HepG2 (cell line): ENCODE measurements at regions of chr11 and their contacts with region 1.

Region 1: DNA sequence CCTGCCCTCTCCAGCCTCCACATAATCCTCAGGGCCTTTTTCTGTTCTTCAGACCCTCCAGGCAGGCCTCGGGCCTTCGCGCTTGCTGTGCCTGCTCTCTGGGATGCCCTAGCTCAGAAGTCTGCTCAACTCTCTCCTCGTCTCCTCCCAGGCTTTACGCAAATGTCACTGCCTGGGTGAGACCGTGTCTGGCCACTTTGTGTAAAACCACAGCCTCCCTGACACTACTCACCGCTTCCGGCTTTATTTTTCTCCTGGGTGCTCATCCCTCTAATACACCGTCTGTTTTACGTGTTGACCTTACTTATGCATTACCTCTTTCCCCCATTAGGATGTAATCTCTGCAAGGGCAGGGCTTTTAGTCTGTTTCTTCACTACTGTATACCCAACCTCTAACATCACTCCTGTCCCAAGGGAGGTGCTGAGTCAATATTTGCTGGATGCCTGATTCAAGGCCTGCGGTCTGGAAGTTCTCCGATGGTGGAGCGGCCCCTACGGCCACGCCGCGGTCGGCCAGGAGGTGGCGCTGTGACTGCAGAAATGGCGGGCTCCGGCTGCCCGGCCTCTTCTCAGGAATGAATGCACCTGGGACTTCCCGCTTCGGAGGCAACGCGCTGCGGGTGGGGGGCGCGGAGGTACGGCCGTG is 58.2 kb upstream of the THY1 start:
- DNase-seq: peak; percentile 99
- ATAC-seq: peak; percentile 96
- H3K4me3 ChIP-seq: peak overlapping the region in 1 of 3 experiments; percentile 44; a peak in 1 of 6 replicates
- H3K27ac ChIP-seq: no peak overlapping the region
- H3K4me1 ChIP-seq: peaks cover 41% of the 10 kb centered on the region
- H3K27me3 ChIP-seq: peaks cover 9 to 18% of the 10 kb centered on the region in 2 experiments; a peak in 4 of 5 replicates
- CTCF ChIP-seq: peak; percentile 99
- EP300 ChIP-seq: peak; percentile 49 to 72; a peak in 2 of 4 replicates
- POLR2A ChIP-seq: no peak
- RAD21 ChIP-seq: peak; percentile 97

Region 2: DNA sequence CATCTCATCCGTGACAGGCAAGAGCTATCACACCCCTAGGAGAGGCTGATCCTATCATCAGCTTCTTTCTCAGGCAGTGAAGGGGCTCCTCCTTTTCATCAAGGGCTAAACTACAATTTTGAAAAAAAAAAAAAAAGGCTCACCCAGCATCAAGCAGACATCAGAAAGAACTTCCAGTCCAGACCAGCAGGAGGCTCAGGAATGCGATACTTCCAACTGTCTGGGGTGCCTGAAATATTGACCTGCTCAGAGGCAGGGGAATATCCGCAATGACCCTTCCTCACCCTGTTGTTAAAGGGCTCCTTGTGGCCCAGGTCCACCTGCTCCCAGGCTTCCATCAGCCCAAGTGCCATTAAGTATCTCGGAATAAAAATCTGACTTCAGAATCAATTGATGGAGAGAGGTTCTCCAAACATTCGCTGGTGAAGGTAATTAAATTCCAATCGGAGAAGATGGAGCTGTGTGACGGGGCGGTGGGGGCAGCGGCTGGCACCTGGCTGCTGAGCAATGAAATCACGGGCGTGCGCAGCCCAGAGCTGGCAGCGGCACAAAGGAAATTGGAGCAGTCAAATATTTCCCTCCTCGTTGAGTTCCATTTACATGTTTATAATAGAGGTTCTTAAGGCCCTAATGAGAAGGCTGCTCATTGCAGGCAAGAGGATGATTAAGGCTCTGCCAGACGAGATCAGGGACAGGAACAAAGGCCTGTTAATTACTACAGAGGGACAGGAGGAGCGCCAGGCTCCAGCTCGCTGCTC is 10.8 kb after region 1 on chr11:
- CTCF ChIA-PET with region 1: no interaction called
- POLR2A ChIA-PET with region 1: no interaction called
- in situ Hi-C with region 1: no loop called
- intact Hi-C with region 1: no loop called
- DNase-seq: no peak
- ATAC-seq: peak; percentile 35; the same call in 1 of the 3 replicates
- H3K4me3 ChIP-seq: no peak overlapping the region
- H3K27ac ChIP-seq: no peak overlapping the region
- H3K4me1 ChIP-seq: no peaks in the 10 kb centered on the region
- H3K27me3 ChIP-seq: peaks cover 1 to 15% of the 10 kb centered on the region in 2 experiments; a peak in 3 of 5 replicates
- CTCF ChIP-seq: no peak
- EP300 ChIP-seq: no peak
- POLR2A ChIP-seq: no peak
- RAD21 ChIP-seq: no peak

Region 3: DNA sequence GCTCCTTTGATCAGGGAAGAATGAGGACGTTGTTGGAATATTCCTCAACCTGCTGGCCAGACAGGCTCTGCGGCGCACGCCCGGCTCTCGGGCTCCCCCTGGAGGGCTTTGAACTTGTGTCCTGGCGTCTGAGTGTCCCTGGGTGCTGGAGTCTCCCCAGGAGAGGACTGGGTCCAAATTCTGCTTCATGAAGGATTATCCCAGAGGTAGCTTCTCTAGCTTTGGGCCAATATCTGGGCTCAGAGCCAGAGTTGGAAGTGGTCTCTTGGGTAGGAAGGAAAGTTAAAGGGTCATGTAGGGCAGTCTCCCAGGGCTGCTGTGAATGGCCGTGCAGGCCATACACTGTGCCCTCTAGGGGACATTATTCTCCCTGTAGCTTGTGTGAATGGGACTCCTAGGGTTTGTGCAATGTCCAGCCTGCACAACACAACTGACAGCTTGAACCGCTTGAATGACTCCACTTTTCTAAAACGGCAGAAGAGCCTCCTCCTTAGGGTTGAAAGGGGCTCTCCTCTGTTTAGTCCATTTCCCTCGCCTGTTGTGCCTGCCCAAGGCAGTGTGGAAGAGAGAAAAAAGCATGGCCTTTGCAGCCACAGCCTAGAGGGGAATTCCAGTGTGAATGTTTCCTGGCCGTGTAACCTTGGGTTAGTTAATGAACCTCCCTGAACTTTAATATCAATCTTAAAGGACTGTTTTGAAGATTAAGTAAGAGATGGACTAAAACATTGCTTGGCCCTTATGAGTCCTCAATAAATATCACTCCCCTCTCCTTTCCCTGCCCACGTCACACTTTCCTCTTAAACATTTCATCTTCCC is 53.0 kb after region 1 on chr11:
- CTCF ChIA-PET with region 1: interaction called, 48 read pairs
- POLR2A ChIA-PET with region 1: no interaction called
- in situ Hi-C with region 1: loop called (anchors 5 kb)
- intact Hi-C with region 1: loop called (anchors 1 kb)
- DNase-seq: peak; percentile 57
- ATAC-seq: peak; percentile 98
- H3K4me3 ChIP-seq: no peak overlapping the region
- H3K27ac ChIP-seq: no peak overlapping the region
- H3K4me1 ChIP-seq: peaks cover 6% of the 10 kb centered on the region; the same call in 1 of the 2 replicates
- H3K27me3 ChIP-seq: peaks cover 3 to 50% of the 10 kb centered on the region in 2 experiments; a peak in 3 of 5 replicates
- CTCF ChIP-seq: peak; percentile 78
- EP300 ChIP-seq: no peak
- POLR2A ChIP-seq: no peak
- RAD21 ChIP-seq: no peak; the same call in 1 of the 2 replicates

Region 4: GRCh38 chr11:119741369-119742262 is 260.5 kb after region 1 on chr11:
- CTCF ChIA-PET with region 1: no interaction called
- POLR2A ChIA-PET with region 1: no interaction called
- in situ Hi-C with region 1: loop called (anchors 5 kb)
- intact Hi-C with region 1: no loop called
- DNase-seq: peak; percentile 21
- ATAC-seq: peak; percentile 95
- H3K4me3 ChIP-seq: peak overlapping the region in 2 of 3 experiments; percentile 33 to 61; a peak in 4 of 6 replicates
- H3K27ac ChIP-seq: no peak overlapping the region
- H3K4me1 ChIP-seq: peaks cover 18% of the 10 kb centered on the region
- H3K27me3 ChIP-seq: peaks cover 10 to 73% of the 10 kb centered on the region in 2 experiments; a peak in 4 of 5 replicates
- CTCF ChIP-seq: peak; percentile 92
- EP300 ChIP-seq: no peak
- POLR2A ChIP-seq: no peak
- RAD21 ChIP-seq: peak; percentile 79

Region 5: GRCh38 chr11:120108154-120108865 is 627.2 kb after region 1 on chr11:
- CTCF ChIA-PET with region 1: no interaction called
- POLR2A ChIA-PET with region 1: no interaction called
- in situ Hi-C with region 1: loop called (anchors 10 kb)
- intact Hi-C with region 1: loop called (anchors 1 kb)
- DNase-seq: peak; percentile 14
- ATAC-seq: peak; percentile 90
- H3K4me3 ChIP-seq: no peak overlapping the region
- H3K27ac ChIP-seq: no peak overlapping the region
- H3K4me1 ChIP-seq: no peaks in the 10 kb centered on the region
- H3K27me3 ChIP-seq: peaks cover 4 to 56% of the 10 kb centered on the region in 2 experiments; a peak in 4 of 5 replicates
- CTCF ChIP-seq: peak; percentile 96
- EP300 ChIP-seq: no peak
- POLR2A ChIP-seq: no peak
- RAD21 ChIP-seq: peak; percentile 93